Activated CD4-positive, alpha-beta T cell treated with anti-CD3 and anti-CD28 coated beads, Interleukin-2, amount 10 ng/mL, durations not matched to agents 24 days and 14 days (primary cell): ENCODE measurements at regions of chr10 and their contacts with region 1.

Region 1: GRCh38 chr10:97736902-97737769 is at the start of gene ZFYVE27:
- DNase-seq: peak; percentile 99
- H3K4me3 Mint-ChIP-seq: peak within 1 kb of the TSS; percentile 96
- H3K27ac Mint-ChIP-seq: peak within 1 kb of the TSS; percentile 94
- H3K4me1 Mint-ChIP-seq: peaks cover 38% of the 10 kb centered on the region
- H3K27me3 Mint-ChIP-seq: peaks cover 5% of the 10 kb centered on the region
- total RNA-seq, gene ZFYVE27: 38.1 and 42.2 TPM in 2 replicates

Region 2: DNA sequence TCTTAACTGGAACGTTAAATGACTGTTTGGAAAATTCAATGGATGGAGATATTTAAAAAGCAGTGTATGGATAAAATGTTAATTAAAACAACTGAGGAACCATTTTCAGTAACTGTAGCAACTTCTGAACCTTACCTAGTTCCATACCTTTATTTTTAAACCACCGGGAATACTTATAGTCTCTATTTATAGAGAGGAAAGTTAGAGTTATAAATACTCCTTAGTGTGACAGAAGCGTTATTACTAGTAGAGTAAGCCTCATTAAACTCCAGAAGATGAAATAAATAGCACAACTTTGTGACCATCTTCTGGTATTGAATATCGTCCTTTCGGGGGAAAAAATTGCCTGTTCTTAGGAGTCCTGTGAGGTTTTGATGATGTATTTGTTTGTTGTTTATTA is 790.1 kb before region 1 on chr10:
- intact Hi-C with region 1: no loop called
- DNase-seq: no peak
- H3K4me3 Mint-ChIP-seq: no peak overlapping the region
- H3K27ac Mint-ChIP-seq: no peak overlapping the region
- H3K4me1 Mint-ChIP-seq: peaks cover 12% of the 10 kb centered on the region
- H3K27me3 Mint-ChIP-seq: no peaks in the 10 kb centered on the region

Region 3: DNA sequence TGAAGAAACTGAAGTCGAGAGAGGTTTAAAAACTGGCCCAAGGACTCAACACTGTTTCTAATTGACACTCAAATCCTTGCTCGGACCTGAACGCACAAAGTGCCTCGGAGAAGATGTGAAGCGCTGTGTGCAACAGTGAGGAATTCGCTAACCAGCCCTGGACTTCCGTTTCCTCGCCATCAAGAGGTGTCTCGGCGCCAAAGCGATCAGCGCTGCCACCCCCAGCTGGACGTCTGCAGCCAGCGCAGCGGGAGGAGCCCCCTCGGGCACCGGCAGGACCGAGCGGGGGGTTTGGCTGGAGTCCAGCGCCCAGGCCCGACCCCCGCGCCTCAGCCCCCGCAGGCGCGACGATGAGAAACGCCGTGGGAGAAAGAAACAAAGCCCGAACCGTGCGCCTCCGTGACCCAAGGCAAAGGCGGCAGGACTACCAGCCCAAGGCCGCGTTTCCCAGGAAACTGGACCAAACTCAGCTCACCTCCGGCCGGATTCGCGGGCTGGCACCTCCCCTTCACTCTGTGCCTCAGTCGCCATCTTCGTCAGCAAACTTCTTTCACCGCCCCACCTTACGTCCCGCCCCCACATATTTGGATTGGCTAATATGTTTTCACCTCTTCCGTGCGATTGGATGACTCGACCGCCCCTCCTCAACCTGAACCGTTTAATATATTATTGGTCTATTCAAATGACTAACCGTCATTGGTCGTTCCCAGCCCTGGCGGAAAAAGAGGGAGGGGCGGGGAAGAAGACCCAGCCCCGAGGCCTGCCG is 444.9 kb before region 1 on chr10 and contains the start of gene ARHGAP19:
- intact Hi-C with region 1: loop called (anchors 1 kb)
- DNase-seq: peak; percentile 98
- H3K4me3 Mint-ChIP-seq: peak within 1 kb of the TSS; percentile 88
- H3K27ac Mint-ChIP-seq: peak within 1 kb of the TSS; percentile 87
- H3K4me1 Mint-ChIP-seq: peaks cover 23% of the 10 kb centered on the region
- H3K27me3 Mint-ChIP-seq: no peaks in the 10 kb centered on the region
- total RNA-seq, gene ARHGAP19: 26.4 and 30.7 TPM in 2 replicates

Region 4: DNA sequence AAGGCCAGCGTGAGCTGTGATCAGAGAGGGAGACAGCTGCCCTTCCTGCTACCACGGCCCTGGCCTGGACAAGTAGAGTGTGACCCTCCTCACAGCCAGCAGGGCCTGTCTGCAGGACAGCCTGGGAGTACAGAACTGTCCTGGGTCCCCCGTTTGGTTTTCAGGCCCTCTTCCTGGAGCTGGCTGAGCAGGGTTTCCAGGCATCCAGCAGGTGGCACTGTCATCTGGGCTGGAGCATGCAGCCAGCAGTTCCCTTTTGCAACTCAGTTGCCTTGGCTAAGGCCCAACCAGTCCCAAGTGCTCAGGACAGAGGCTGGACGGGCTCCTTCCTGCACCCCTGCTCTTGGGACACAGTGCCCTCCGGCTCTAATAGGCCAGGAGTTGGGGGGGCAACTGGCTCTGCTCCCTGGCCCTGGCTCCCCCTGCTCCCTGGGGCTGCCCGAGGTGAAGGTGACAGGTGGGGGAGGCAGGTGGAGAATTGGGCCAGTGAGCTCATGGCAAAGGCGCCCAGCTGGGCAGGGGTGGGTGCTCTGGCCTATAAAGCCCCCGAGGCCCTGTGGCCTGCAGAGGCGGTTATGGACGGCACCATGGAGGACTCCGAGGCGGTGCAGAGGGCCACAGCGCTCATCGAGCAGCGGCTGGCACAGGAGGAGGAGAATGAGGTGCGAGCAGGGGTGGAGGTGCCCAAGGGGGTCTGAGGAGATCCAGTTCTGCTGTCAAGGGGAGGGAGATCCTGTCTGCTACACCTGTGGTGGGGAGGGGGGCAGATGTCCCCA is 164.7 kb before region 1 on chr10 and contains the start of gene ANKRD2:
- intact Hi-C with region 1: loop called (anchors 10 kb)
- DNase-seq: peak; percentile 87
- H3K4me3 Mint-ChIP-seq: no peak within 1 kb of the TSS
- H3K27ac Mint-ChIP-seq: no peak within 1 kb of the TSS
- H3K4me1 Mint-ChIP-seq: no peaks in the 10 kb centered on the region
- H3K27me3 Mint-ChIP-seq: peaks cover 4% of the 10 kb centered on the region
- total RNA-seq, gene ANKRD2: not detected in 2 replicates

Region 5: GRCh38 chr10:97601268-97602215 is 135.6 kb before region 1 on chr10:
- intact Hi-C with region 1: no loop called
- DNase-seq: no peak
- H3K4me3 Mint-ChIP-seq: no peak overlapping the region
- H3K27ac Mint-ChIP-seq: no peak overlapping the region
- H3K4me1 Mint-ChIP-seq: no peaks in the 10 kb centered on the region
- H3K27me3 Mint-ChIP-seq: peaks cover 3% of the 10 kb centered on the region

Region 6: GRCh38 chr10:97714048-97714371 is 23.1 kb before region 1 on chr10:
- intact Hi-C with region 1: loop called (anchors 1 kb)
- DNase-seq: peak; percentile 87
- H3K4me3 Mint-ChIP-seq: peak overlapping the region; percentile 97
- H3K27ac Mint-ChIP-seq: peak overlapping the region; percentile 97
- H3K4me1 Mint-ChIP-seq: peaks cover 10% of the 10 kb centered on the region
- H3K27me3 Mint-ChIP-seq: peaks cover 26% of the 10 kb centered on the region